ENCODE measurements at regions of chr12 and their contacts with region 1.

Region 1: DNA sequence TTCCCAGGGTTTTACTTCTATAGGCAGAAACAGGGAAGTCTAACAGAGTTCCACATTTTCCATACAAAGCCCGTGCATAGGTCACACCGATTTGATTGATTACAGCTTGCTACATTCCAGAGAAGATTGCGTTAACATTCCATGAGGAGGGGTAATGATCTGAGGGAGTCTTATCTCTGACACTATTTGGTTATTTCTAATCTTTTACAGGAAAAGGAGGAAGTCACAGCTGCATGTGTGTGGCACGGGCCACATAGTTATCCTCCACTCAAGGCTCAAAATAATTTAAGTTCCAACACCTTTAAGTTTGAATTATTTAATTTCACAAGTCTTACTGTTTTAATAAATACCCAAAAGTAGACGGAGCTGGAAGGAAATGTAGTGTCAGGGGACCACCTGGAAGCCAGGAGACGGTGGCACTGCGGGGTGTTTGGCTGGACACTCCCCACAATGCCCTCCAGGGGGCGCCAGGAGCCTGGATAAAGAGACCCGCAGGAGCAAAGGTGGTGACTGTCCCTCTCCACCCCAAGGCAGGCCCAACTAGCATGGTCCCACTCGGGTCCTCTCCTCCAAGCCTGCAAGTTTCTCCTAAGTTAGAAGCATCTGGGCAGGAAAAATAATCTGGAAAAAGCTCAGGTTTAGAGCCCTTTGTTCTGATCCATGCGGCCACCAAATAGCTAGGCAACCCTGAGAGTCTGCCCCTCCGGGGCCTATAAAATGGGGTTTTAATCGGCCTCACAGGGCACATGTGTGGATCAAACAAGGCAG is 20.2 kb downstream of the KRT8 start:
- DNase-seq: peak; percentile 78
- H3K4me3 ChIP-seq: no peak overlapping the region
- H3K27ac ChIP-seq: no peak overlapping the region
- H3K4me1 ChIP-seq: no peaks in the 10 kb centered on the region
- H3K27me3 ChIP-seq: no peaks in the 10 kb centered on the region
- CTCF ChIP-seq: peak; percentile 67 to 96 (median 96)
- POLR2A ChIP-seq: no peak

Region 2: DNA sequence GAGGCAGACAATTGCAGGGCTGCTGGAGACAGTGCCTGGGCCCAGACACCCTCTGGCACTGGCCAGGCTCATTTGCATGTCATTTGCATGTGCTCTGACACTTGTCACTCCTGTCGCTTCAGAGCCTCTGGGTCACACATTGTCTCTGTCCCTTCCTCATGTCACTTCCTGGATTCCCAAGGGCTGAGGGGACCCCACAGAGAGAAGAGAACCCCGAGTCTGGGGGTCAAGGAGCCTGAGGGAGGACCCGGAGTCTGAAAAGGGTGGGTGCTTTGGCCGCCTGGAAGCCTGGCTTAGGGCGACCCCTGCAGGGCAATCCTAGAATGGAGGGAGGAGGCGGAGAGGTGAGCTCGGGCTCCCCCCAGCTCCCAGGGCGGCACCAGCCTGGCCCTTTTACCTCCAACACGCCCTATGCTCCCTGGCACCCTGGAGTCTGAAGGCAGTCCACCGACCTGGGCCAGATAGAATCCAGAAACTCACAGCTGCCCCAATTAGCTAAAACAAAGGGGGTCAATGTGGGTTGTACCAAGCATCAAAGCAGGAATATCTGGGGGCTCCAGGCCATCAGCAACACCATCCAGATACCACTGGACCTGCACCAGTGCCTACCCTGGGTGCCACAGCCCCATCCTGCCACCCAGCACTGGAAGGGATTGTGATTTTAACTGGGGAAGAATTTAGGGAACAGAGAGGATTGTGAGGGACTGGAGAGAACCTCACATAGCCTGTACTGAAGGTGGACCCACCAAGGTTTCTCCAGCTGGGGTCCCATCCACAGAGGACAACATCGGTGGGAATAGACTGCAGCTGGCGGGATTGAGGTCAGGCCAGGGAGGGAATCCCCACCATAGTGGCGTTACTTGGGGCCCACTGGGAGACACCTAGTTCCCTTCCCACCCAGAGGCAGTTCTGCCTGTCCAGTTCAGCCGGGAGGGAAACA is 14.1 kb before region 1 on chr12:
- intact Hi-C with region 1: no loop called
- DNase-seq: peak; percentile 46
- H3K4me3 ChIP-seq: no peak overlapping the region
- H3K27ac ChIP-seq: peak overlapping the region; percentile 42 to 43
- H3K4me1 ChIP-seq: no peaks in the 10 kb centered on the region
- H3K27me3 ChIP-seq: no peaks in the 10 kb centered on the region
- CTCF ChIP-seq: peak; percentile 30 to 87 (median 64)
- POLR2A ChIP-seq: peak; percentile 9

Region 3: DNA sequence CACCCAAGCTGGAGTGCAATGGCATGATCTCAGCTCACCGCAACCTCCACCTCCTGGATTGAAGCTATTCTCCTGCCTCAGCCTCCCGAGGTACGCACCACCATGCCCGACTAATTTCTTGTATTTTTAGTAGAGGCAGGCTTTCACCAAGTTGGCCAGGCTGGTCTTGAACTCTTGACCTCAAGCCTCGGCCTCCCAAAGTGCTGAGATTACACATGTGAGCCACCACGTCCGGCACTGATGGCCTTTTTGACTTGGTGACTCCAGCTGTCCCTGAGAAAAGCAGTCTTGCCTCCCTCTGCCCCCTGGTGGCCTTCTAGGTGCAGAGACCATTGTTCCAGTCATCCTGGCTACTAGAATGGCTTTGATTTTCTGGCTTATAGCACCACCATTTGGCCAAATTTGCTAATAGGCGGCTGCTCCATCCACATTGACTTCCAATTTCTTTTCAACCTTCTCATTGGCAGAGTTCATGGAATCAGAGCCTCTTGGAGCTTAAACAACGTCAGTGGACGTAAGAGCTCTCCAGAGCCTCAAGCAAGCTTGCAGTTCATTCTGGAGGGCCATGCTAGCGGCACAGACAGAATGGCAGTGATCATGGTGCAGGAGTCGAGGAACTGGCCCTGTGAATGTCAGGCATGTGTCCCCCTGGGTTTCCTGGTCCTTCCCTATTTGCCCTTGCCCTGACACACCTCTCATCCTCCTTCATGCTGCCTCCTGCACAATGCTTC is 96.1 kb after region 1 on chr12:
- intact Hi-C with region 1: loop called (anchors 1 kb)
- DNase-seq: peak; percentile 94
- H3K4me3 ChIP-seq: no peak overlapping the region
- H3K27ac ChIP-seq: no peak overlapping the region
- H3K4me1 ChIP-seq: no peaks in the 10 kb centered on the region
- H3K27me3 ChIP-seq: no peaks in the 10 kb centered on the region
- CTCF ChIP-seq: peak; percentile 81 to 100 (median 98)
- POLR2A ChIP-seq: no peak

Measured in prostate gland (tissue), 2 donors.